SK-N-SH (cell line): ENCODE measurements at regions of chr11 and their contacts with region 1.

Region 1: GRCh38 chr11:62497132-62497915 is 49.3 kb downstream of the AHNAK start:
- DNase-seq: peak; percentile 66
- H3K4me3 ChIP-seq: no peak overlapping the region
- H3K27ac ChIP-seq: peak overlapping the region in 1 of 2 experiments; percentile 55; a peak in 2 of 4 replicates
- H3K4me1 ChIP-seq: peaks cover 3 to 10% of the 10 kb centered on the region in 2 experiments; a peak in 2 of 4 replicates
- H3K27me3 ChIP-seq: no peaks in the 10 kb centered on the region
- CTCF ChIP-seq: peak; percentile 56
- EP300 ChIP-seq: no peak
- RAD21 ChIP-seq: peak; percentile 79

Region 2: GRCh38 chr11:62360685-62361084 is 136.6 kb before region 1 on chr11:
- CTCF ChIA-PET with region 1: no interaction called
- POLR2A ChIA-PET with region 1: no interaction called
- DNase-seq: no peak
- H3K4me3 ChIP-seq: no peak overlapping the region
- H3K27ac ChIP-seq: no peak overlapping the region
- H3K4me1 ChIP-seq: no peaks in the 10 kb centered on the region
- H3K27me3 ChIP-seq: no peaks in the 10 kb centered on the region
- CTCF ChIP-seq: no peak
- EP300 ChIP-seq: no peak
- RAD21 ChIP-seq: no peak

Region 3: DNA sequence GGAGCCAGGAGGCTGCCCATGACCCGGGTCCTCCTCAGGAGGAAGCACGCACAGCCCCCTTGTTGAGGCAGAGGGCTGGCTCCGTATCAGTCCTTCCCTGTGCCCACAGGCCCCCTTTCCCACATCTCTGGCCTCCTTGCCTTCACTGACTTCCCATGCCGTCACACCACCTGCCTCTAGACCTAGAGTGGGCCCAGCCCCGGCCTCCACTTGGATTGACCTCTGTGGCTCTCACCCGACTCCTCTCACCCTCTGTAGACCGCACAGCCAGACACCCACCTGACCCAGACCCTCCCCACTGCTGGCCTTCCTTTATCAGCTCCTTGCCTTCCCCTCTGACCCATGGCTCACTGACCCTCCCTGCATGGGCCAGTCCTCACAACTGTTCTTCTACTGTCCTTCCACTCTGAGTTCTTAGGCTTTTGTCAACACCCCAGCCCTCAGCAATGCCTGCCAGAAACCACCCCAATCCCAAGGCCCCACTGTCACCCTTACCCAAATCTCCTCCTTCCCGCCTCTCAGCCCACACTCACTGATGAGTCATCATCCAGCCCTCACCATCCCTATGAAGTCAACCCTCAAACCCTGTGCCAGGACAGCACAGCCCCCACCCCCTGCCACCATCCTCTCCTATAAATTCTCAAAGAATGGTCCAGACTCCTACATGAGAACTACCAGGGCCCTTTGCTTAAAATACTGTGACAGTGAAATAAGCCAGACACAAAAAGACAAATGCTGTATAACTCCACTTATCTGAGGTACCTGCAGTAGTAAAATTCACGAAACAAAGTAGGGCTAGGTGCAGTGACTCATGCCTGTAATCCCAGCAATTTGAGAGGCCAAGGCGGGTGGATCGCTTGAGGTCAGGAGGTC is 25.1 kb before region 1 on chr11:
- CTCF ChIA-PET with region 1: interaction called, 13 read pairs
- POLR2A ChIA-PET with region 1: no interaction called
- DNase-seq: peak; percentile 40
- H3K4me3 ChIP-seq: no peak overlapping the region
- H3K27ac ChIP-seq: peak overlapping the region; percentile 24 to 35; a peak in 3 of 4 replicates
- H3K4me1 ChIP-seq: peaks cover 4% of the 10 kb centered on the region in 2 experiments; a peak in 2 of 4 replicates
- H3K27me3 ChIP-seq: no peaks in the 10 kb centered on the region
- CTCF ChIP-seq: no peak
- EP300 ChIP-seq: peak; percentile 38 to 73; a peak in 3 of 4 replicates
- RAD21 ChIP-seq: no peak

Region 4: GRCh38 chr11:63277345-63277943 is 780.1 kb after region 1 on chr11:
- CTCF ChIA-PET with region 1: no interaction called
- POLR2A ChIA-PET with region 1: no interaction called
- DNase-seq: no peak
- H3K4me3 ChIP-seq: no peak overlapping the region
- H3K27ac ChIP-seq: no peak overlapping the region
- H3K4me1 ChIP-seq: no peaks in the 10 kb centered on the region
- H3K27me3 ChIP-seq: no peaks in the 10 kb centered on the region
- CTCF ChIP-seq: no peak
- EP300 ChIP-seq: no peak
- RAD21 ChIP-seq: no peak